ENCODE measurements at regions of chr3 and their contacts with region 1.

Region 1: DNA sequence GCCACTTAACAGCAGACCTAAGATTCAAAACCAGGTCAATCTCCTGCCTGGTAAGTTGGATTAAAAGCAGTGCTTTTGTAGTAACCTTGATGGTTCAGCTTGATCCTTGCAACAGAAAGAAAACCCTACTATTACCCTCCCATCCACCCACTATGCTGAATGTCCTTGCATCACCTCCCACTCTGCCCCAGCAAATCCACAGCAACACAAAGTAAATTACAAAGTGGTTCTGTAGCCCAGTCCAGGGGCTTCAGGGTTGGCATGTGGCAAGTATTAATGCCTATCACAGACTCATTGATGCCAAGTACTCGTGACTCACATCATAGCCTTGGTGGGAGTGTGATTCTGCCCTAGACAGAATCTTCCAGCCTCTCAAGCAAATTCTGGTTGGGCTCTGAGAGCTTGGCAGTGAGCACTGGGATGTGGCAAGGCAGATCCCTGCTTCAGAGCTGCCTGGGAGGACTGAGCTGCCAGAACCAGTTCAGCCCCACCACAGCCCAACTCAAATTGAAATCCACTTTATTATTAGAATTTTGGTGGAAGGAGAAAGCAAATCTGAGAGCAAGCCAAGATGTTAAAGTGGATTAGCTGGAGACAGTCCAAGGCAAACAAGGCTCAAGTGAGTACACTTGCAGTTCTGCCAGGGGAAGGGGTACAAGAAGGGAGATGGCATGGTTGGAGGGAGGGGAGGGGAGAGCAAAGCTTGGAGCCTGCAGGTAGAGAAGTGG is 225.8 kb upstream of the UMPS start:
- DNase-seq: no peak
- H3K4me3 ChIP-seq: no peak overlapping the region
- H3K27ac ChIP-seq: no peak overlapping the region
- H3K4me1 ChIP-seq: no peaks in the 10 kb centered on the region
- H3K27me3 ChIP-seq: no peaks in the 10 kb centered on the region
- CTCF ChIP-seq: no peak
- EP300 ChIP-seq: no peak
- POLR2A ChIP-seq: no peak
- RAD21 ChIP-seq: no peak

Region 2: GRCh38 chr3:124450366-124450765 is 54.1 kb before region 1 on chr3:
- CTCF ChIA-PET with region 1: no interaction called
- POLR2A ChIA-PET with region 1: no interaction called
- DNase-seq: no peak
- H3K4me3 ChIP-seq: no peak overlapping the region
- H3K27ac ChIP-seq: no peak overlapping the region
- H3K4me1 ChIP-seq: no peaks in the 10 kb centered on the region
- H3K27me3 ChIP-seq: no peaks in the 10 kb centered on the region
- CTCF ChIP-seq: no peak
- EP300 ChIP-seq: no peak
- POLR2A ChIP-seq: no peak
- RAD21 ChIP-seq: no peak

Region 3: DNA sequence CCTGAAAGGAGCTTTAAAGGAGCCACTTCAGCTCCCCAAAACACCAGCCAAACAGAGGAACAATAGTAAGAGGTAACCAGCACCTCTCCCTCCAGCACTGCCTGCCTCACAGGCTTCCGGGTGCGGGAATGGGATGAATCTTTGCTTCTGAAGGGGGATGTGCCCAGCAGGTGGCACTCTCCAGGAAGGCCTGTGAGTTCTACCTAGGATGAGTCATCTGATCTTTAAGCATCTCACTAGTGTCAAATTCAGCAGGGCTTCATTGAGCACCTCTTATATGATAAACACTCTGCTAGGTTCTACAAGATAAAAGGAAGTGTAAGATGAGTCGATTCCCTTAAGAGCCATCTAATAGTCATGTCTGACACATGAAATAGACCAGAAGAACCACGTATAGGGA is 11.7 kb before region 1 on chr3:
- CTCF ChIA-PET with region 1: interaction called, 10 read pairs
- POLR2A ChIA-PET with region 1: no interaction called
- DNase-seq: peak in 1 of 2 experiments; percentile 49
- H3K4me3 ChIP-seq: no peak overlapping the region
- H3K27ac ChIP-seq: no peak overlapping the region
- H3K4me1 ChIP-seq: no peaks in the 10 kb centered on the region; a peak in 1 of 7 replicates
- H3K27me3 ChIP-seq: no peaks in the 10 kb centered on the region
- CTCF ChIP-seq: peak; percentile 22 to 39 (median 32); a peak in 2 of 4 replicates
- EP300 ChIP-seq: no peak
- POLR2A ChIP-seq: no peak
- RAD21 ChIP-seq: peak in 1 of 2 experiments; percentile 37; a peak in 1 of 4 replicates

Measured in H1 (cell line).